RWPE1 (cell line): ENCODE measurements at regions of chr17 and their contacts with region 1.

Region 1: DNA sequence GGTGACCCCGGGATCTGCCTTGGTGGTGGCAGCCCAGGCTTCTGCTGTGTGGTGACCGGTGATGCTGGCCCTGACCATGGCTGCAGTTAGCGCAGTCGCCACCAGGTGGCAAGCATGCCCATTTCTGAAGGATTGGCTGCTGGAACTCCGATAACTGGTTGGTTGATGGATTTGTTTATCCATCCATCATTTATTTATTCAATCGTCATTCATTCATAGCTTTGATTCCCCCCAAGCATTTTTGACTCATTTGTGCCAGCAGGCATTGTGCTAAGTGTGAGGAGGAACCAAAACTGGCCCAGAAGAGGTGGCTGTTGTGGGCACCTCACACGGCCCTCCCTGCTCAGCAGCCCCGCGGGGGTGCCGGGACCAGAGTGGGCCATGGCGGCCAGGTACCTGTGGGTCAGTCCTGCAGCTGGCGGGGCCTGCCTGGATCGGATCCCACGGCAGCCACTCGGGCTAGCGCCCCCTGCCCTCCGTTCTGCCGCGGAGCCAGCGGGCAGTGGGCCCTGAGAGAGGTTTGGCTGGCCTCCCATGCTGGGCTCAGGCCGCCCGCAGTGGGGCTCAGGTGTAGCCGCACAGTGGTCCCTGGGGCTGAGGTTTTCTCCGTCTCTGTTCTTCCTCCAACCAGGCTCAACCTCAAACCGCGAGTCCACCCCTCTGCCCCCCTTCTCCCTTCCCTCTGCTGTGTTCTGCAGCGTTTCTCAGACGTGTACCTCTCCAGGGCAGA is 28.8 kb upstream of the ITGA3 start:
- DNase-seq: peak; percentile 82
- H3K27ac ChIP-seq: peak overlapping the region; percentile 100
- CTCF ChIP-seq: peak; percentile 98

Region 2: GRCh38 chr17:49980703-49981197 is 46.3 kb before region 1 on chr17:
- CTCF ChIA-PET with region 1: no interaction called
- POLR2A ChIA-PET with region 1: no interaction called
- DNase-seq: peak; percentile 70
- H3K27ac ChIP-seq: peak overlapping the region; percentile 93
- CTCF ChIP-seq: no peak

Region 3: DNA sequence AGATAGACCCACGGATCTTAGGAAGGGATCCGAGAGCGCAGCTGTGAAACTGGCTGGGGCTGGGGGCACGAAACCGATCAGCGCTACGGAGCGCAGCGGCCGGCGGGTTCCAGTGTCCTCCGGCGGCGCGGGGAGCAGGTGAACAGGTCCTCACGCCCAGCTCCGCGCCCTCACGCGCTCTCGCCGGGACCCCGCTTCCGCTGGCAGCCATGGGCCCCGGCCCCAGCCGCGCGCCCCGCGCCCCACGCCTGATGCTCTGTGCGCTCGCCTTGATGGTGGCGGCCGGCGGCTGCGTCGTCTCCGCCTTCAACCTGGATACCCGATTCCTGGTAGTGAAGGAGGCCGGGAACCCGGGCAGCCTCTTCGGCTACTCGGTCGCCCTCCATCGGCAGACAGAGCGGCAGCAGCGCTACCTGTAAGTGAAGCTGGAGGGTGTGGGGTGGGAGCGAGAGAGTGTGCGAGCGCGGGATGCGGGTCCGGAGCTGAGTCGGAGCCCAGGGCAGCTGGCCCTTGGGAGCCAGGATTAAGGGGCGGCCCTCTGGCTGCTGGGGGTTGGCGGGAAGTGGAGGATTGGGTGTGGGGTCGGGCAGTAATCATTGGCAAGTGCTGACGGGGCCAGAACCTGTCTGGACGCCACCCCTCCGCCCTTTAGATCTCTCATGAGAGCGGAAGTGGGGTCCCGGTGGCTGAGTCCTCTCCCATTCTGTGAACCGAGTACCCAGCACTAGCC is 29.3 kb after region 1 on chr17:
- CTCF ChIA-PET with region 1: interaction called, 15 read pairs
- POLR2A ChIA-PET with region 1: interaction called, 63 read pairs
- DNase-seq: no peak
- H3K27ac ChIP-seq: peak overlapping the region; percentile 100
- CTCF ChIP-seq: peak; percentile 63

Region 4: DNA sequence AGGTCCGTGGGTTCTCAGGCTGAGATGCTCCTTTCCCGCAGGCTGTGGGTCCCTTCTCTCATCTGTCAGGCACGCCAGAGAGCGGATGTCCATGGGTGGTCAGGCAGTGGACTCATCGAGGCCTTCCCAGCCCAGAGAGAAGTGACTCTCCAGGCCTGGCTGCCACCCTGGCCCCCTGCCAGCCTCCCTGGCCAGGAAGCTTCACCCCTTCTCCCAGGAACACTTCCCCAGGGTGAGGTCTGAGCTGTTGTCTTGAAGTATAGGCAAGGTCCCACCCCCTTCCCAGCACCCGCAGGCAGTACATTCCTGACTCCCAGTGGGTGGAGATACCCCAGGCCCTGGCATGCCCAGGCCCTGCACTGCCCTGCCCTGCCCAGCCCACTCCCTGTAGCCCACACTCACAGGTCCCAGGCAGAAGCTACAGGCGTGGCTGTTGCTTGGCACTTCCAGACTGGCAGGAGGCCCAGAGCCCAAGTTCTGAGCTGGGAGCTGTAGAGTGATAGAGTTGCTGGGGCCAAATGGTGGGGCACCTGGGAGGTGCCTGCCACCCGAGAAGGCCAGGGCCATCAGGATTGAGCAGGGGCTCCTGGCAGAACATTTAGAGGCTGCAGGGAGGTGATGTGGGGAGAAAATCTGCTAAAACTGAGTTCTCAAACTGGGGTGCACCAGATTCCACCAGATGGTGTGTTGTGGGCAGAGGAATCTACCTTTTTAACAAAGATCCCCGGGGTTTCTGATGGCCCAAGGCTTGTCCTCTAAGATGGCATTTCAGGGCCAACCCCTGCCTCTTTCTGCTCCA is 35.5 kb after region 1 on chr17:
- CTCF ChIA-PET with region 1: interaction called, 15 read pairs
- POLR2A ChIA-PET with region 1: interaction called, 63 read pairs
- DNase-seq: peak; percentile 96
- H3K27ac ChIP-seq: peak overlapping the region; percentile 100
- CTCF ChIP-seq: no peak

Region 5: GRCh38 chr17:50087246-50087911 is 60.3 kb after region 1 on chr17:
- CTCF ChIA-PET with region 1: interaction called, 17 read pairs
- POLR2A ChIA-PET with region 1: no interaction called
- DNase-seq: peak; percentile 60
- H3K27ac ChIP-seq: peak overlapping the region; percentile 85
- CTCF ChIP-seq: peak; percentile 94